CD4-positive, alpha-beta memory T cell (primary cell): ENCODE measurements at regions of chr1 and their contacts with region 1.

Region 1: GRCh38 chr1:155277070-155277895 is at the start of gene HCN3:
- DNase-seq: peak; percentile 80 to 90 (median 81)
- H3K4me3 ChIP-seq: peak within 1 kb of the TSS; percentile 62 to 81
- H3K4me3 Mint-ChIP-seq: peak within 1 kb of the TSS; percentile 78 to 86 (median 83)
- H3K27ac ChIP-seq: peak within 1 kb of the TSS; percentile 55
- H3K27ac Mint-ChIP-seq: peak within 1 kb of the TSS; percentile 42 to 91 (median 81)
- H3K4me1 ChIP-seq: peaks cover 35% of the 10 kb centered on the region
- H3K4me1 Mint-ChIP-seq: peaks cover 23 to 41% (median 32%) of the 10 kb centered on the region in 4 donors
- H3K27me3 ChIP-seq: no peaks in the 10 kb centered on the region
- H3K27me3 Mint-ChIP-seq: no peaks in the 10 kb centered on the region
- total RNA-seq, gene HCN3: 4.9 to 5.3 TPM

Region 2: DNA sequence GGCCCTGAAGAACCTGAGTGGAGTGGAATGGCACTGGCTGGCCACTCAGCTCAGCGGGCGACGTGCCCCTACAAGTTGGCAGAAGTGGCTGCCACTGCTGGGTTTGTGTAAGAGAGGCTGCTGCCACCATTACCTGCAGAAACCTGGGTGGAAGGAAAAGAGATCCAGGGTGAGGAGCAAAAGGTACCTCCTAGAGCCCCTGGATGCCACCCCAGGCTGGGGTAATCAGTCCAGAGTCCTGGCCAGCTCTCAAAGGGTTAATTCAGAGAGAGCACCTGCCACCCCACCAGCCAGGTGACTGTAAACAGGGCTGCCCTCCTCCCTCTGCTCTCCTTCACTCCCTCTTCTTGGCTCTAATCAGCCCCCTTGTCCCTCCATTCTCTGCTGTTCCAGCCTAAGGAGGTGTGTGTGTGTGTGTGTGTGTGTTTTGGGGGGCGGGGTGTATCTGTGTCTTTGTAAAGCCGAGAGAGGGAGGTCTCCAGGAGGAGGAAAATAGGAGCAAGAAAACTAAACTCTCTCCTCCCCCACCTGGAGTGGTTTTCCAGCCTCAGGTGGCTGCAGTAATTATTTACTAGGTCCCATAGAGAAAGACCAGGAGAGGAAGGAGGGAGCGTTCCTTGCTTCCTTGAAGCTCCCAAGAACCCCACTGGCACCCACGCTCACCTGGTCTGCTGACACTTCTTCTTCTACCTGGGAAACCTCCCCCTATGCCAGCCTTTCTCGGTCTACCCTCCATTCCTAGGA is 91.0 kb before region 1 on chr1:
- CTCF ChIA-PET with region 1: no interaction called
- POLR2A ChIA-PET with region 1: no interaction called
- intact Hi-C with region 1: no loop called
- DNase-seq: peak in 1 of 5 donors; percentile 2
- H3K4me3 ChIP-seq: no peak overlapping the region
- H3K4me3 Mint-ChIP-seq: no peak overlapping the region
- H3K27ac ChIP-seq: no peak overlapping the region
- H3K27ac Mint-ChIP-seq: peak overlapping the region in 2 of 7 donors; percentile 48 to 57
- H3K4me1 ChIP-seq: no peaks in the 10 kb centered on the region
- H3K4me1 Mint-ChIP-seq: peaks cover 4 to 13% (median 5%) of the 10 kb centered on the region in 4 donors
- H3K27me3 ChIP-seq: no peaks in the 10 kb centered on the region
- H3K27me3 Mint-ChIP-seq: no peaks in the 10 kb centered on the region

Region 3: GRCh38 chr1:155261852-155262673 is 15.2 kb before region 1 on chr1 and contains the start of gene SCAMP3:
- CTCF ChIA-PET with region 1: interaction called, 8 read pairs
- POLR2A ChIA-PET with region 1: interaction called, 53 read pairs
- intact Hi-C with region 1: loop called (anchors 1 kb)
- DNase-seq: peak; percentile 82 to 94 (median 84)
- H3K4me3 ChIP-seq: peak within 1 kb of the TSS; percentile 94
- H3K4me3 Mint-ChIP-seq: peak within 1 kb of the TSS; percentile 95 to 100 (median 99)
- H3K27ac ChIP-seq: peak within 1 kb of the TSS; percentile 86
- H3K27ac Mint-ChIP-seq: peak within 1 kb of the TSS; percentile 86 to 99 (median 97)
- H3K4me1 ChIP-seq: peaks cover 23% of the 10 kb centered on the region
- H3K4me1 Mint-ChIP-seq: peaks cover 12 to 40% (median 30%) of the 10 kb centered on the region in 4 donors
- H3K27me3 ChIP-seq: no peaks in the 10 kb centered on the region
- H3K27me3 Mint-ChIP-seq: no peaks in the 10 kb centered on the region
- total RNA-seq, gene SCAMP3: 94.4 to 101 TPM

Region 4: DNA sequence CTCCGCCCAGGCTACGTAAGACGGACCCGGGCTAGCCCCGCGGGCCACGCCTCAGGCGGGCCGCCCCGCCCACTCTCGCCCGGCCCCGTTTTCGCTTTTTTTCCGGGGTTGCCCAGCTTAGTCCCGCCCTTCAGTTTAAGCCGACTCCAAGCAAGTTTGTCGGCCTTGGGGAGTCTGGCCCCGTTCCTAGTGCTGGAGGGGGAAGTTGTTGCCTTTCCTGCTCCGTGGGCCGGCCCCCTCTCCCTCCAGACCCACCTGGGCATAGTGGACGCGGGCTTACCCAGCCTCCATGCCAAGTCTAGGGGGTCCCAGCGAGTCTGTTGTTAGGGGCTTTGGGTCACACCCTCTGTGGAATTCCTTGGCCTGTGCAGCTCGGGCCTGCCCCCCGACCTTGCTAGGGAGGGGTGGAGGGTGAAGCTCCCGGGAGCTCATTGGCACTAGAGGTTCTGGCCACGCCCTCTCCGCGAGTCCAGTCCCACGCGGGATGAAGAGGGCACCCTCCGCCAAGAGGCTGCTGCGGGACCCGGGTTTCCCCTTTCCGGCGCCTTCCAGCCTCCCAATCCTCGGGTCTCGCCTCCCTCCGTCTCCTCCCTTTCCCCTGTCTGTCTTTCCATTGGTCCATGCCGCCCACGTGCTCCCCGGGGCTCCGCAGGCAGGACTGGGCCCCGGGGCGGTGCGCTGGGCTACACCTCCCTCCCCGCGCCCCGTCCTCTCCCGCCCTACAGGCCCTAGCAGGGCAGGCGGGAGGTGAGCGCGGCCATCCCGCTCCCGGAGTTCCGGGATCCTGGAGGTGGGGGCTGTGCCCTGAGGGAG is 46.7 kb after region 1 on chr1:
- CTCF ChIA-PET with region 1: interaction called, 43 read pairs
- POLR2A ChIA-PET with region 1: interaction called, 39 read pairs
- intact Hi-C with region 1: loop called (anchors 1 kb)
- DNase-seq: peak; percentile 83 to 93 (median 85)
- H3K4me3 ChIP-seq: peak overlapping the region; percentile 91 to 96
- H3K4me3 Mint-ChIP-seq: peak overlapping the region; percentile 70 to 91 (median 88)
- H3K27ac ChIP-seq: peak overlapping the region; percentile 96
- H3K27ac Mint-ChIP-seq: peak overlapping the region; percentile 82 to 93 (median 90)
- H3K4me1 ChIP-seq: peaks cover 31% of the 10 kb centered on the region
- H3K4me1 Mint-ChIP-seq: peaks cover 14 to 46% (median 29%) of the 10 kb centered on the region in 4 donors
- H3K27me3 ChIP-seq: no peaks in the 10 kb centered on the region
- H3K27me3 Mint-ChIP-seq: no peaks in the 10 kb centered on the region